WTC11 (cell line): ENCODE measurements at regions of chr9 and their contacts with region 1.

Region 1: GRCh38 chr9:27489087-27489876 is 34.8 kb upstream of the IFNK start:
- DNase-seq: no peak
- ATAC-seq: peak; percentile 49
- H3K4me3 Mint-ChIP-seq: no peak overlapping the region
- H3K27ac Mint-ChIP-seq: peak overlapping the region; percentile 60
- H3K4me1 Mint-ChIP-seq: peaks cover 52% of the 10 kb centered on the region
- H3K27me3 Mint-ChIP-seq: no peaks in the 10 kb centered on the region
- CTCF ChIP-seq: no peak

Region 2: GRCh38 chr9:27473111-27473529 is 16.2 kb before region 1 on chr9:
- CTCF ChIA-PET with region 1: no interaction called
- POLR2A ChIA-PET with region 1: no interaction called
- DNase-seq: no peak
- ATAC-seq: no peak
- H3K4me3 Mint-ChIP-seq: no peak overlapping the region
- H3K27ac Mint-ChIP-seq: peak overlapping the region; percentile 16; the same call in 1 of the 2 replicates
- H3K4me1 Mint-ChIP-seq: peaks cover 46% of the 10 kb centered on the region
- H3K27me3 Mint-ChIP-seq: no peaks in the 10 kb centered on the region
- CTCF ChIP-seq: no peak

Region 3: GRCh38 chr9:27539479-27540441 is 50.5 kb after region 1 on chr9:
- CTCF ChIA-PET with region 1: interaction called, 12 read pairs
- POLR2A ChIA-PET with region 1: interaction called, 3 read pairs
- DNase-seq: no peak
- ATAC-seq: no peak
- H3K4me3 Mint-ChIP-seq: no peak overlapping the region
- H3K27ac Mint-ChIP-seq: peak overlapping the region; percentile 57
- H3K4me1 Mint-ChIP-seq: peaks cover 20% of the 10 kb centered on the region
- H3K27me3 Mint-ChIP-seq: no peaks in the 10 kb centered on the region
- CTCF ChIP-seq: no peak